Activated naive CD4-positive, alpha-beta T cell treated with anti-CD3 and anti-CD28 coated beads for 36 hours (primary cell): ENCODE measurements at regions of chr17 and their contacts with region 1.

Region 1: GRCh38 chr17:8118769-8119580 is 661 bp upstream of the ALOXE3 start:
- DNase-seq: peak; percentile 91
- H3K4me3 Mint-ChIP-seq: peak overlapping the region; percentile 84
- H3K27ac Mint-ChIP-seq: peak overlapping the region; percentile 95
- H3K4me1 Mint-ChIP-seq: peaks cover 48% of the 10 kb centered on the region
- H3K27me3 Mint-ChIP-seq: peaks cover 36% of the 10 kb centered on the region

Region 2: DNA sequence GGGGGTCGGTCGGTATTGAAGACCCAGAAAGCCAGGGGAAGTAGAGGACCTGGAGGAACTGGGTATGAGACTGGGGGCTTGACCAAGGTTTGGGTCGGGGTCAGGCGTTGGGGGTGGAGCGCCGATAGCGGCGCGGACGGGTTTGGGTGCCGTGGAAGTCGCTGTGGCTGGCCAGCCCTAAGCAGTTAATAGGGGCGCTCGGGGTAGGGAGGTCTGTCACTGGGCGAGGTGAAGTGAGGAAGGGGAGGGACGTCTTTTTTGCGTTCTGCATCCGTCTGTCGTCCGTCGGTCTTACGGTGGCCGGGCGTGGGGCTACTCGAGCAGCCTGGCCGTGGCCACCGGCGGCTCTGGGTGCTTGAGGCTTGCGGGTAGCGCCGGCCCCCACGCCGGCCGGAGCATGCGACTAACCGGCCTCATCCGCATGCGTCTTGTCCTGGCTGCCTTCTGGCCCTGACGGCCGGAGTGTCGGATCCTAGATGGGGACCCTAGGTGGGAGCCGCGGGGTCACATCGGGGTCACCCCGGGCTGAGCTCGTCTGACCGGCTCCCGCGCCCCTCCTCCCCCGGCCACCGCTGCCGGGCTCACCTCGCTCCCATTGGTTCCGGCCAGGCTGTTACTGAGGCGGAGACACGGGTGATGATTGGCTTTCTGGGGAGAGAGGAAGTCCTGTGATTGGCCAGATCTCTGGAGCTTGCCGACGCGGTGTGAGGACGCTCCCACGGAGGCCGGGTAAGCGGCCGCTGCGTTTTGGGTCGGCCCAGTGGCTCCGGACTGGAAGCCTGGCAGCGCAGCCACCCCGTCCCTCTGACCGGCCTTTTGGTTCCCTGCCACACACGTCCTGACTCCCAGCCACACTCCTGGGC is 274.5 kb before region 1 on chr17:
- CTCF ChIA-PET with region 1: no interaction called
- intact Hi-C with region 1: loop called (anchors 2 kb)
- DNase-seq: peak; percentile 90
- H3K4me3 Mint-ChIP-seq: peak overlapping the region; percentile 89
- H3K27ac Mint-ChIP-seq: peak overlapping the region; percentile 99
- H3K4me1 Mint-ChIP-seq: peaks cover 46% of the 10 kb centered on the region
- H3K27me3 Mint-ChIP-seq: no peaks in the 10 kb centered on the region

Region 3: GRCh38 chr17:8057691-8058114 is 61.3 kb before region 1 on chr17:
- CTCF ChIA-PET with region 1: interaction called, 27 read pairs
- intact Hi-C with region 1: loop called (anchors 2 kb)
- DNase-seq: peak; percentile 60
- H3K4me3 Mint-ChIP-seq: no peak overlapping the region
- H3K27ac Mint-ChIP-seq: no peak overlapping the region
- H3K4me1 Mint-ChIP-seq: peaks cover 3% of the 10 kb centered on the region
- H3K27me3 Mint-ChIP-seq: peaks cover 49% of the 10 kb centered on the region

Region 4: GRCh38 chr17:8091033-8091687 is 27.8 kb before region 1 on chr17:
- CTCF ChIA-PET with region 1: interaction called, 53 read pairs
- intact Hi-C with region 1: loop called (anchors 1 kb)
- DNase-seq: no peak
- H3K4me3 Mint-ChIP-seq: no peak overlapping the region
- H3K27ac Mint-ChIP-seq: no peak overlapping the region
- H3K4me1 Mint-ChIP-seq: peaks cover 8% of the 10 kb centered on the region
- H3K27me3 Mint-ChIP-seq: peaks cover 15% of the 10 kb centered on the region

Region 5: DNA sequence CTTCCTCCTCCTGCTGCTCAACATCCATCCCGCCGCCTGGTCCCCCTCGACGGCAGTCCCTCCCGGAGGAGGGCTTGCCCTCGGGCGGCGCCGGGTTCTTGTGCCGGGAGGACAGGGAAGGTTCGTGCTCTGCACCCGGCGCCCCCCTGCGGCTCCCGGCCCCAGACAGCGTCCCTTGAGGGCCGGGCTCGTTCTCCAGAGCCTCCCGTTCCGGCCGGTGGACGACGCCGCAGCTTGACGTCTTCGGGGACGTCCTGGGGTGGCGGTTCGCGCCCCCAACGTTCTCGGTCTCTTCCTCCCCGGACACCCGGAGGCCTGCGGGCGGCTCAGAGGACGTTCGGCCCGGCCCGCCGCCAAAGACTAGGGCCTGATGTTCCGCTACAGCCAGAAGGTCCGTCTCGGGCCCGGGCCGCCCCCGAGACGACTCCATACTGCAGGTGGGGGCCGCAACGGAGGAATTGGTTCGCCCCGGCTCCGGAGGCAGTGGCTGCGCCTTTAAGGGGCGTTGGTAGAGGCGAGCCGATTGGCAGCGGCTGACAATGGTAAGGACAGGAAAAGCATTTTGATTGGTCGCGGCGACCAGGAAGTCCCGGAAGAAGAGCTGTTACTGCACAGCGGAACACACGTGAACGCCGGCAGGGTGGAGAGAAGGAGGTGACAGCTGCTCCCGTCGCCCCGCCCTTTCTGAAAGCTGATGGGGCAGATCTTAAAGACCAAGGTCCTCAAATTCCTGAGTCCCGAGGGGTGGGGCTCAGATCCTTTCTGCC is 70.9 kb after region 1 on chr17 and contains the start of gene BORCS6:
- CTCF ChIA-PET with region 1: interaction called, 14 read pairs
- intact Hi-C with region 1: loop called (anchors 1 kb)
- DNase-seq: peak; percentile 98
- H3K4me3 Mint-ChIP-seq: no peak within 1 kb of the TSS
- H3K27ac Mint-ChIP-seq: peak within 1 kb of the TSS; percentile 82
- H3K4me1 Mint-ChIP-seq: peaks cover 7% of the 10 kb centered on the region
- H3K27me3 Mint-ChIP-seq: no peaks in the 10 kb centered on the region
- total RNA-seq, gene BORCS6: 4.0 to 4.3 TPM

Region 6: GRCh38 chr17:8294814-8295316 is 175.9 kb after region 1 on chr17:
- CTCF ChIA-PET with region 1: interaction called, 15 read pairs
- intact Hi-C with region 1: loop called (anchors 1 kb)
- DNase-seq: no peak
- H3K4me3 Mint-ChIP-seq: peak overlapping the region; percentile 85
- H3K27ac Mint-ChIP-seq: peak overlapping the region; percentile 77
- H3K4me1 Mint-ChIP-seq: peaks cover 19% of the 10 kb centered on the region
- H3K27me3 Mint-ChIP-seq: no peaks in the 10 kb centered on the region

Region 7: DNA sequence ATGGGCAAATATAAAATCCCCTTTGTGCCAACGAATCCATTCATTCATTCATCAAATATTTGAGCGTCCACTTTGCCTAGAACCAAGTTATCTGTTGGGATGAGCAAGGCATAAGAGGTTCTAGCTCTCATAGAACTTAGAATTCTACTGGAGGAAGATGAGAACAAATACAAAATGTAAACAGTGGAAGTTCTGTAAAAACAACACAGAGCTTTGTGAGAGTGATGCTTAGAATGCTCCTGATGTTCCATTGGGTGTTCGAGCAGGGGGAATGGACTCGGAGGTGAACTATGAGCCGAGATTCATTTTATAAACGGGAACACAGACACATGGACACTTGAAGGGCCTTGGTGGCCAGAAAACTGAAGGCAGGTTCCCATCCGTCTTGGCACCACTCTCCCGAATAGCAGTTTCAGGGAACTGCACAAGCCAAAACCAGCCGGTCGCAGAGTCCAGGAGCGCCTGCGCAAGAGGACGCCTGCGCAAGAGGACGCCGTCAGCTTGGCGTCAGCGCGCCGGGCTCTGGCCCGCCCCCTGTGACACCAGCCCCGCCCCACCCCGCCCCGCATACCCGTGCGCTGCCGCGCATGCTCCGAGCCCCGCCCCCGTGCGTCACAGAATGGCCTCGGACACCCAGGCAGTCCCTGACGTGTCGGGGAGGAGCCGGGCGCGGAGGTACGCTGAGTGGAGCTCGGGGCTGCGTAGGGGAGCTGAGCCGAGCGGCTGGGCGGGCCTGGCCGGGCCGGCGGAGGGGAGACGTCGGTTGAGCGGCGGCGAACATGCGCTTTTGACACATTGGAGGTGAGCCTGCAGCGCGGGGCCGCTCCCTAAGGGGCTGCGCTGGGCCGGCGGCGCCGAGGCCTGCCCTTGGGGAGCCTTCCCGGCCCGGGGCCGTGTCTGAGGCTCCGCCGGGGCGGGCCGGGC is 316.5 kb after region 1 on chr17 and contains the start of gene NDEL1:
- CTCF ChIA-PET with region 1: no interaction called
- intact Hi-C with region 1: loop called (anchors 2 kb)
- DNase-seq: peak; percentile 99
- H3K4me3 Mint-ChIP-seq: peak within 1 kb of the TSS; percentile 96
- H3K27ac Mint-ChIP-seq: peak within 1 kb of the TSS; percentile 93
- H3K4me1 Mint-ChIP-seq: peaks cover 32% of the 10 kb centered on the region
- H3K27me3 Mint-ChIP-seq: no peaks in the 10 kb centered on the region
- total RNA-seq, gene NDEL1: 43.1 to 47.1 TPM